ENCODE measurements at regions of chr13 and their contacts with region 1.

Region 1: DNA sequence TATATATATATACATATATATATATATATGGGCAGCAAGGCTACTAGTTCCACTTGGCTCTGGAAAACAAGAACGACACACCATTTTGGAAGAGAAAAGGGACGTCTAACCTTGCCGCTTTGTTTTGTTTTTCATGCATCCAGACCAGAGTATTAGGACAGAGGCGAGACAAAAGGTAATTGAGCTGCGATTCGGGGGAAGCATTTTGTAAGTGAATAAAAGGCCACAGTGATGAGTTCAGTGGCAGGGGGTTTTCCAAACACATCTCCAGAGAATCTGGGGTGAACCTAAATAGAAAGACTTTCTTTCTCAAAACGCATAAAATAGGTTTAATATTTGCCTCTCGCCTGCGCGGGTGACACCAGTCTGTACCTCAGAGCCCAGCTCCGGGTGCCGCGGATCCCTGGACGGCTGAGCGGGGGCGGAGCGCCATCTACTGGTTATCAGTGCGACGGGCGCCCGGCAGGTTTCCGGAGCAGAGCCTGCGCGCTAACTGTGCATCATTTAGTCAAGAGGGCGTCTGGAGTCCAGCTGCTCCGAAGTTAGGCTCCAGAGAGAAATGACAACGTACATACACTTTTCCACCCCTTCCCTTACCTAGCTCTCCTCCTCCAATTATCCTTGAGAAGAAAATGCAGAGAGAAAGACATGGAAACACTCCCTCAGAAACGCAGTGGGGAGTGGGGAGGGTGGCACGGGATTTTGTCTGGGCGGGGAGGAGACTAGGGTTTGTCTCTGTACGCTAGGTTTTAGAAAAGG is 262.3 kb downstream of the TBC1D4 start:
- DNase-seq: peak; percentile 70 to 90 (median 82)
- ATAC-seq: peak; percentile 99
- H3K4me3 ChIP-seq: no peak overlapping the region
- H3K4me3 Mint-ChIP-seq: peak overlapping the region; percentile 52
- H3K27ac ChIP-seq: no peak overlapping the region
- H3K27ac Mint-ChIP-seq: no peak overlapping the region
- H3K4me1 ChIP-seq: peaks cover 7% of the 10 kb centered on the region
- H3K4me1 Mint-ChIP-seq: peaks cover 8% of the 10 kb centered on the region
- H3K27me3 ChIP-seq: peaks cover 0 to 22% of the 10 kb centered on the region in 2 experiments
- H3K27me3 Mint-ChIP-seq: peaks cover 52% of the 10 kb centered on the region
- CTCF ChIP-seq: peak; percentile 95

Region 2: DNA sequence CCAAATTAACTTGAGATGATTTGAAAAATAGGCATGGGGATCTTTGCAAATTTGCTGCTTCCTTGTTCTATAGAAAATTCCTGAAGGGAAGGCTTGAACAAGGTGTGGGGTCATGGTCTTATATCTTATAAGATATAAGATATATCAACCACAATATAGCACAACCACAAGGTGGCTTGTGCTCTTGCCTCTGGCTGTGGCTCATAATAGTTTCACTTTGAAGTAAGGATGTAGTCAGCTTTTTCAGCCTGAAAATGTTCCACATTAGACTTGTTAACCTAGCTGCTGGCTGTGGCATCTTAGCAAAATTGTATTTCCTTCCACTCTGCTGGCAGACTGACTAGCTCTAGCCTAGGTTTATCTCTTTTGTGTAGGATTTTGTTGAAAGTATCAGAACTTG is 1991.1 kb before region 1 on chr13:
- CTCF ChIA-PET with region 1: no interaction called
- POLR2A ChIA-PET with region 1: no interaction called
- intact Hi-C with region 1: loop called in 1 of 2 experiments (anchors 2 kb)
- DNase-seq: peak in 4 of 14 experiments; percentile 16 to 71 (median 52)
- ATAC-seq: peak; percentile 67
- H3K4me3 ChIP-seq: no peak overlapping the region
- H3K4me3 Mint-ChIP-seq: no peak overlapping the region
- H3K27ac ChIP-seq: peak overlapping the region in 1 of 2 donors; percentile 32
- H3K27ac Mint-ChIP-seq: peak overlapping the region; percentile 79
- H3K4me1 ChIP-seq: peaks cover 32% of the 10 kb centered on the region
- H3K4me1 Mint-ChIP-seq: peaks cover 57% of the 10 kb centered on the region
- H3K27me3 ChIP-seq: no peaks in the 10 kb centered on the region
- H3K27me3 Mint-ChIP-seq: no peaks in the 10 kb centered on the region
- CTCF ChIP-seq: peak; percentile 28

Region 3: DNA sequence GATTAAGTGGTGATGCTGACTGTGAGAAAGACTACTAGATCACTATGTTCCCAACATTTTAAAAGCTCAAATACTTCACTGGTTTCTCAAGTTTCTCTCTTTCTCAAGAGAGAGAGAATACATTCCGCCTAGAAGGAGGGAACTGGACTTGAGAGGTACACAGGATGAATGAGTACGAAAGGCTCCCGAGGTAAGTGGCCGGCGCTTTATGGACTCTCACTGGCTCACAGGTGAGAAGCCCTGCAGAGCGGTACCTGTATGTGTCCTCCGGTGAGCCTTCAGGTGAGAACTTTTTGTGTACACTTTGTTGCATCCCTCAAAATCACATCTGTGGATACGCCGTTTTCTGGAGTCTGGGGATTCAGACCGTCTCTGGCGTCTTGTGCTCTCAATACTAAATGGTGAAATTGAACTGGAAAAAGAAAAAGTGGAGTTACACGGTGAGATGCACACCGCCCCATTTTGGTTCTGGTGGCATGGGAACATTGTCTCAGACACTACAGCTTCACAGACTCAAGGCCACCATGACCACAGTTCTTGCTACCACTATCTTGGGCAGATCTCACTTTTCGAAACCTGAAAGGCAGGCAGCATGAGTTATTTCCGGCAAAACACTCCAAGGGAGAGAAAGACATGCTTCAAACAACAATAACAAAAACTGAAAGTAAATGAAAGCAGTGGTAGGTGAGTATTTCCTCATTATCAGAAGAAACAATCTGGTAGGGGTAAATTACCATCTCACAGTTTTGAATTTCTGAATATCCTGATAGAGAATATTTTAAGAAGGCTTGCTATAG is 1504.3 kb before region 1 on chr13:
- CTCF ChIA-PET with region 1: no interaction called
- POLR2A ChIA-PET with region 1: no interaction called
- intact Hi-C with region 1: loop called in 1 of 2 experiments (anchors 5 kb)
- DNase-seq: peak; percentile 21 to 94 (median 46)
- ATAC-seq: peak; percentile 88
- H3K4me3 ChIP-seq: peak overlapping the region; percentile 34
- H3K4me3 Mint-ChIP-seq: peak overlapping the region; percentile 73
- H3K27ac ChIP-seq: peak overlapping the region; percentile 62 to 73
- H3K27ac Mint-ChIP-seq: peak overlapping the region; percentile 94
- H3K4me1 ChIP-seq: peaks cover 35% of the 10 kb centered on the region
- H3K4me1 Mint-ChIP-seq: peaks cover 53% of the 10 kb centered on the region
- H3K27me3 ChIP-seq: no peaks in the 10 kb centered on the region
- H3K27me3 Mint-ChIP-seq: no peaks in the 10 kb centered on the region
- CTCF ChIP-seq: no peak

Region 4: DNA sequence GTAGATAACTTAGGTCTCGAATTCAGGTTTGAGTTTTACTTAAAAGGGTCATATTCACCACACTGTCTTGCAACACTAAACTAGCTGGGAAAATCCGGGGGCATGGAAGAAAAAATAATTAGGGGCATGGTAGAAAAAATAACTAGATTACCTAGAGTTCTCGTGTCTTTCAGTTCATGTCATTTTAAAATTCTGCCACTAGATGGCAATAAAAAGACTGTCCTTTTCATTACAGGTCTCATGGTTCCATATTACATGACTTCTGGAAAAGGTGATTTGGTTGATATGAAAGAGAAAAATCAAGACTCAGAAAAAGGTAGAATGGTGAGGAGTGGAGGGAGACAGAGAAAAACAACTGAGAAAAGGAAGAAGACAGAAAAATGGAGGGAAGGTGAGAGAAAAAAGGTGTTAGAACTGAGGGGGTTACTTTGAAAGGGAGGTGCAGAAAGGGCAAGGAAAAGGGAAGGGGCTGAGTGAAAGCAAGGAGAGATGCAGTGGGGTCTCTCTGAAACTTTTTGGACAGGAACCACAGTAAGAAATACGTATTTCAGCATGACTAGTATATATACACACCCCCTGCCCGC is 1384.4 kb before region 1 on chr13:
- CTCF ChIA-PET with region 1: no interaction called
- POLR2A ChIA-PET with region 1: no interaction called
- intact Hi-C with region 1: loop called (anchors 5 kb)
- DNase-seq: peak in 3 of 14 experiments; percentile 65 to 69 (median 68)
- ATAC-seq: peak; percentile 73
- H3K4me3 ChIP-seq: no peak overlapping the region
- H3K4me3 Mint-ChIP-seq: no peak overlapping the region
- H3K27ac ChIP-seq: no peak overlapping the region
- H3K27ac Mint-ChIP-seq: no peak overlapping the region
- H3K4me1 ChIP-seq: peaks cover 7% of the 10 kb centered on the region
- H3K4me1 Mint-ChIP-seq: peaks cover 59% of the 10 kb centered on the region
- H3K27me3 ChIP-seq: no peaks in the 10 kb centered on the region
- H3K27me3 Mint-ChIP-seq: no peaks in the 10 kb centered on the region
- CTCF ChIP-seq: peak; percentile 81

Region 5: DNA sequence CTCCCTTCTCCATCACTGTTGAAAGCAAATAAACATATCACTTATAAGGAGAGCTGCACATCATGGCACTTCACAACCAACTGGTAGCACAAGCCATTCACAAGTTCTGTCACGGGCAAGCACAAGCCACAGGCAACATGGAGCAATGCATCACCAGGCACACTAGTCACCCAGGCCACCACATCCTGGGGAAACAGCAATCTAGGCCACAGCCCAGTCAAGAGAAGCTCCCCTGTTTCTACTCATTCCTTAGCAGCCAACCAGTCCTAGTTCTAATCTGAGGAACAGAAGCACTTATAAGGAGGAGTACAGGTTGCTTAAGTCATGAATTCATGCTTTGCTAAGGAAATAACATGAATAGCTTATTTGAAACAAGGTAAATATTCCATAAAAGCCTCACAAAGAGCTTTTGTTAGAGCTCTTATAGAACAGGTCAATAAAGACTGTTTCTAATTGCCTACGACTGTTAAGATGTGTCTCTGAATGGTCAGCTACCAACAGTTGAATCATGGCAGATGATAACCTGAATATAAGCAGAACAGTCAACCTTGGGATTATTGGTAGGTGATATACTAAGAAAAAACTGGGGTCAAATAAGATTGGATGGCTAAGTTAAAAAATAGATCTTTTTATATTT is 93.3 kb after region 1 on chr13:
- CTCF ChIA-PET with region 1: no interaction called
- POLR2A ChIA-PET with region 1: no interaction called
- intact Hi-C with region 1: no loop called
- DNase-seq: peak in 10 of 14 experiments; percentile 4 to 68 (median 15)
- ATAC-seq: peak; percentile 80
- H3K4me3 ChIP-seq: no peak overlapping the region
- H3K4me3 Mint-ChIP-seq: peak overlapping the region; percentile 51
- H3K27ac ChIP-seq: no peak overlapping the region
- H3K27ac Mint-ChIP-seq: peak overlapping the region; percentile 77
- H3K4me1 ChIP-seq: peaks cover 14% of the 10 kb centered on the region
- H3K4me1 Mint-ChIP-seq: peaks cover 45% of the 10 kb centered on the region
- H3K27me3 ChIP-seq: no peaks in the 10 kb centered on the region
- H3K27me3 Mint-ChIP-seq: no peaks in the 10 kb centered on the region
- CTCF ChIP-seq: no peak

Measured in CD4-positive, alpha-beta T cell (primary cell).